ENCODE measurements at regions of chr11 and their contacts with region 1.

Region 1: GRCh38 chr11:81476345-81476744 is 1257.3 kb downstream of the FAM181B start:
- DNase-seq: no peak
- H3K4me3 ChIP-seq: no peak overlapping the region
- H3K27ac ChIP-seq: no peak overlapping the region
- H3K4me1 ChIP-seq: no peaks in the 10 kb centered on the region
- H3K27me3 ChIP-seq: no peaks in the 10 kb centered on the region
- CTCF ChIP-seq: no peak

Region 2: GRCh38 chr11:81237139-81237538 is 239.2 kb before region 1 on chr11:
- intact Hi-C with region 1: no loop called
- DNase-seq: peak in 3 of 5 donors; percentile 35 to 92 (median 87)
- H3K4me3 ChIP-seq: no peak overlapping the region
- H3K27ac ChIP-seq: no peak overlapping the region
- H3K4me1 ChIP-seq: no peaks in the 10 kb centered on the region
- H3K27me3 ChIP-seq: no peaks in the 10 kb centered on the region
- CTCF ChIP-seq: peak; percentile 48

Region 3: DNA sequence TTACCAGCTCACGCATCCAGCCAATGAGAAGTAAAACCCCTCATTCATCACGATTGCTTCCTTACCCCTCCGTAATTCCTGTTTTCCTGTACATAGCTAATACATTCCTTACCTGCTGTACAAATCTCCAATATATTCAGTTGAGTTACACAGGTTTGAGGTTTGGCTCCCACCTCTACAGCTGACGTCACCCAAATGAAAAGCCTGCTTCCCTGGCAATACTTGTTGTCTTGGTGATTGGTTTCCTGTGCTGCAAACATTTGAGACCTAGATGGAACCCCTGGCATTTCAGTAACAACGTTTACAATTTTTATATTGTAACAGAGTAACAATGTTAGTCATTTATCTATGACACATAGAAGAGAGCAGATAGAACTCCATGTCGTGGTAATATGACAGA is 48.0 kb before region 1 on chr11:
- intact Hi-C with region 1: loop called (anchors 5 kb)
- DNase-seq: peak in 1 of 5 donors; percentile 2
- H3K4me3 ChIP-seq: no peak overlapping the region
- H3K27ac ChIP-seq: no peak overlapping the region
- H3K4me1 ChIP-seq: no peaks in the 10 kb centered on the region
- H3K27me3 ChIP-seq: no peaks in the 10 kb centered on the region
- CTCF ChIP-seq: no peak

Region 4: DNA sequence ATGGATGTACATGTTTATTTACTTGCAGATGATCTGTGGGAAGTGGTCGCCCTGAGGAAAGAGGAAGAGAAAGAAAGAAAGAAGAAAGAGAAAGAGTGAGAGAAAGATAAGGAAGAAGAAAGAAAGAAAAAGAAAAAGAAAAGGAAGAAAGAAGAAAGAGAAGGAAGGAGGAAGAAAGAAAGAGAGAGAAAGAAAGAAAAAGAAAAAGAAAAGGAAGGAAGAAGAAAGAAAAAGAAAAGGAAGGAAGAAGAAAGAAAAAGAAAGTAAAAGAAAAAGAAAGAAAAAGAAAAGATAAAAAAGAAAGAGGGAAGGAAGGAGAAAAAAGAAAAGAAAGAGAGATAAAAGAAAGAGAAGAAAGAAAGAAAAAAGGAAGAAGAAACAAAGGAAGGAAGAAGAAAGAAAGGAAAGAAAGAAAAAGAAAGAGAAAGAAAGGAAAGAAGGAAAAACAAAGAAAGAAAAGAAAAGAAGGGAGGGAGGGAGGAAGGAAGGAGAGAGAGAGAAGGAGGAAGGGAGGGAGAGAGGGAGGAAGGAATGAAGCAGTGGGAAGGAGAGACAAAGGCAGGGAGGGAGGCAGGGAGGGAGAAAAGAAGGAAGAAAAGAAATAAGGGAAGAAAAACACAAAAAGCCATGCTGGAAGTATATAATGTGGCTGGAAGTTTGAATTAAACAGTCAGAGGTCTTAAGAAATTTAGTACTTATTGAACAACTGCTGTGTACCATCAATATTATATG is 280.7 kb after region 1 on chr11:
- intact Hi-C with region 1: no loop called
- DNase-seq: no peak
- H3K4me3 ChIP-seq: no peak overlapping the region
- H3K27ac ChIP-seq: no peak overlapping the region
- H3K4me1 ChIP-seq: no peaks in the 10 kb centered on the region
- H3K27me3 ChIP-seq: no peaks in the 10 kb centered on the region
- CTCF ChIP-seq: no peak